PC-9 (cell line): ENCODE measurements at regions of chr18 and their contacts with region 1.

Region 1: DNA sequence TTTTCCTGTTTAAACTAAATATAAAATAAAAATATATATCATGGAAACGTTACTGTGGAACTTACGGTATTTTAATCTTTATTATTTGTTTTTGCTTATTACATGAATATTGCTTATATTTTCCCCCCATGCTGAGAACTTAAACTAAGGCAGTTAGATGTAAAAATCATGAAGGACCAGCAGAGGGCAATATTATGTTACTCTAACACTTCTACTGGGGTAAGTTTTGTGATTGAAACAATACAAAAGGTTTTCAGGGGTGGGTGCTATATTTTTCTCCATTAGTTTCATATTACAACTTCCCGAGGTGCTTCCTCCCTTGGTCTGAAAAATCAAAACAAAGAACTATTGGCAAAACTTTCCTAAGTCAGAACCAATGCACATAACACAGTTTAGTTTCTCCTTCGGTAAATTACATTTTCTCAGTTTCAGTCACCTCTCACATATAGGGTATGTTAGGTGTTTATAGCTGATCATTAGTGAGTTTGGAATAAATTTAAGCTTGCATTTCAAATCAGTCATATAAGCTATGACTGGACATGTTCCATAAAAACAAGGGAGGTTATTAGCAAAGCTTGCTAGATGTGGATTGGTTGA is 54.8 kb downstream of the ZNF407 start:
- DNase-seq: no peak
- H3K4me3 ChIP-seq: no peak overlapping the region
- H3K27ac ChIP-seq: no peak overlapping the region
- H3K4me1 ChIP-seq: no peaks in the 10 kb centered on the region
- H3K27me3 ChIP-seq: no peaks in the 10 kb centered on the region
- CTCF ChIP-seq: peak; percentile 89

Region 2: GRCh38 chr18:74896390-74896991 is 244.0 kb after region 1 on chr18:
- CTCF ChIA-PET with region 1: no interaction called
- POLR2A ChIA-PET with region 1: no interaction called
- intact Hi-C with region 1: loop called (anchors 5 kb)
- DNase-seq: peak; percentile 52 to 54
- H3K4me3 ChIP-seq: no peak overlapping the region
- H3K27ac ChIP-seq: no peak overlapping the region
- H3K4me1 ChIP-seq: no peaks in the 10 kb centered on the region
- H3K27me3 ChIP-seq: no peaks in the 10 kb centered on the region
- CTCF ChIP-seq: peak; percentile 76

Region 3: DNA sequence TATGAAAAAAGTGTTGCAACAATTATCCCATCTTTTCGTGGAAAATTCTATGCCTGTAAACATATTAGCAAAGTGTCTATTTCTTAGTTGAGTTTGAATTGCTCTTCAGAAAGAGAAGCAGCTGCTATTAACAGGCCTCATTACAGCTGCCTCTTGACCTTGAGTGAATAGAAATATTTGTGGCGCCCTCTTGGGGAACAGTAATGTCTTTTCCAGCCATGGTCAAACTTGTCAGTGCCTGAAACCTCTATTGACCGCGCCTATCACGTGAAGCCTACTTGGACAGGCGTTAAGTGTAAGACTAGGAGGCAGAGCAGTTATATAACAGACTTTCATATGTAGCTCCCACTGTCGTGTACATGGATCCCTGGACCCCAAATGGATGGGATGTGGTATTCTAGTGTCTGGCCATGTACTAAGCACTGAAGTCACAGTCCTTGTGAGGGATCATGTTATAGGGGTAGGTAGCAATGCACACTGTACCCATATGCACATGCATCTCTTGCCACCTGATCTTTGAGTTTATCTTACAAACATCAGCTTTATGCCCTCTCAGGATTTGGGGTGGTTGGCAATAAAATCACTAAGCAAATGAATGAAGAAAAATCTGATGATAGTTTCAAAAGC is 311.4 kb after region 1 on chr18:
- CTCF ChIA-PET with region 1: no interaction called
- POLR2A ChIA-PET with region 1: no interaction called
- intact Hi-C with region 1: loop called (anchors 10 kb)
- DNase-seq: peak in 1 of 2 experiments; percentile 7
- H3K4me3 ChIP-seq: no peak overlapping the region
- H3K27ac ChIP-seq: no peak overlapping the region
- H3K4me1 ChIP-seq: no peaks in the 10 kb centered on the region
- H3K27me3 ChIP-seq: no peaks in the 10 kb centered on the region
- CTCF ChIP-seq: peak; percentile 50; the same call in 1 of the 2 replicates

Region 4: DNA sequence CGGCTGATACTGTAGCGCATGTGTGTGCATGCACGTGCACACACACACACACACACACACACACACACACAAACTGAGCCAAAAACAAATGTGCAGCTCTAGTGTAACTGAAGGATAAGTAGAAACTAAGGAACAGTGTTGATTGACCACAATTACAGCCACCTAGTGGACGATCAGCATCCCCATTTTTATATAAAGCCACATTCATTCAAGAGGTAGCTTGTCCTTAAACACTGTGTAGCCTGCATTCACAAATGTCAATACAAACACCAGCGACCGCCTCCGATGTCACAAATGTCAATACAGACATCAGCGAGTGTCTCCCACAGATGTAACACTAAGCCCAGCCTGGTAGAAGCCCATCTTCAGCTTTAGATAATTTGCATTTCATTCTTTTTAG is 389.1 kb after region 1 on chr18:
- CTCF ChIA-PET with region 1: no interaction called
- POLR2A ChIA-PET with region 1: no interaction called
- intact Hi-C with region 1: loop called (anchors 2 kb)
- DNase-seq: no peak
- H3K4me3 ChIP-seq: no peak overlapping the region
- H3K27ac ChIP-seq: no peak overlapping the region
- H3K4me1 ChIP-seq: no peaks in the 10 kb centered on the region
- H3K27me3 ChIP-seq: no peaks in the 10 kb centered on the region
- CTCF ChIP-seq: peak; percentile 69

Region 5: DNA sequence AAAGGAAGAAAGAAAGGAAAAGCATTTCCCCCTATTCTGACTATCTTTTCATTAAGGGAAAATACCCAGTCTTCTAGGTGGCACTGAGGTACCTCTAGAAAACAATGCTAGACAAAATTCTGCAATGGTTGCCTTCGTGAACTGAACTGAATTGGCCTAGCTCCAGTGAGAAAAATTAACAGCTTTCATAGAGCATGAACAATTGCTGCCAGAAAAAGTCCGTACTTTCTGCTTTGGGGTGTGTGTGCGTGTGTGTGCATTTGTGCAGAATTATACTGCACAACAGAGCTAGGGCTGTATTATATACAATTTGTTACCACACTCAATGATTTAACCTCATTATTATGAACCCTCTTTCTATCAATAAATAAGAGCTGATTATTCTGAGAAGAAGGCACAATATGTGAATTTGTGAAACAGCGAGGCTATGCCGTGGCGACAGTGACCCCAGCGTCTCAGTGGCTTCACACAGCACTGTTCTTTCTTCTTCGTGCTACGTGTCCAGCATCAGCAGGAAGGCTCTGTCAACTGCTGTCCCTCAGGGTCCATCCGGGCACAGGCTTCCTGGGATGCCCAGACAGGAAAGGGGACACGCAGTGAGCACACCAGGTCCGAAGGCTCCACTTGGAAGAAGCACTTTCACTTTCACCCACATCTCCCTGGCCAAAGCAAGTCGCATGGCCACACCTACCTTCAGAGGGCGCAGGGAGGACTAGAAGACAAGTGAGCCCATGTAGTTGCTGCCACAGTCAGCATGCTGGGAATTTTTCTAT is 509.0 kb after region 1 on chr18:
- CTCF ChIA-PET with region 1: no interaction called
- POLR2A ChIA-PET with region 1: no interaction called
- intact Hi-C with region 1: loop called (anchors 10 kb)
- DNase-seq: peak in 1 of 2 experiments; percentile 35
- H3K4me3 ChIP-seq: no peak overlapping the region; the same call in 1 of the 2 replicates
- H3K27ac ChIP-seq: no peak overlapping the region
- H3K4me1 ChIP-seq: no peaks in the 10 kb centered on the region
- H3K27me3 ChIP-seq: peaks cover 88% of the 10 kb centered on the region
- CTCF ChIP-seq: no peak

Region 6: GRCh38 chr18:75478996-75479880 is 826.7 kb after region 1 on chr18:
- CTCF ChIA-PET with region 1: no interaction called
- POLR2A ChIA-PET with region 1: no interaction called
- intact Hi-C with region 1: loop called (anchors 5 kb)
- DNase-seq: no peak
- H3K4me3 ChIP-seq: no peak overlapping the region
- H3K27ac ChIP-seq: no peak overlapping the region
- H3K4me1 ChIP-seq: no peaks in the 10 kb centered on the region
- H3K27me3 ChIP-seq: peaks cover 5% of the 10 kb centered on the region; the same call in 1 of the 2 replicates
- CTCF ChIP-seq: peak; percentile 75

Region 7: GRCh38 chr18:76349067-76349715 is 1696.7 kb after region 1 on chr18:
- CTCF ChIA-PET with region 1: no interaction called
- POLR2A ChIA-PET with region 1: no interaction called
- intact Hi-C with region 1: loop called (anchors 10 kb)
- DNase-seq: peak; percentile 44 to 54
- H3K4me3 ChIP-seq: peak overlapping the region; percentile 37; the same call in 1 of the 2 replicates
- H3K27ac ChIP-seq: no peak overlapping the region
- H3K4me1 ChIP-seq: no peaks in the 10 kb centered on the region
- H3K27me3 ChIP-seq: no peaks in the 10 kb centered on the region
- CTCF ChIP-seq: peak; percentile 97